ENCODE measurements at regions of chr5 and their contacts with region 1.

Region 1: GRCh38 chr5:17343675-17344074 is 126.2 kb downstream of the BASP1 start:
- DNase-seq: peak; percentile 59
- ATAC-seq: peak; percentile 82
- H3K4me3 ChIP-seq: no peak overlapping the region
- H3K4me3 Mint-ChIP-seq: peak overlapping the region; percentile 9
- H3K27ac ChIP-seq: no peak overlapping the region
- H3K27ac Mint-ChIP-seq: peak overlapping the region; percentile 61
- H3K4me1 ChIP-seq: peaks cover 7 to 9% of the 10 kb centered on the region in 2 donors
- H3K4me1 Mint-ChIP-seq: peaks cover 9% of the 10 kb centered on the region
- H3K27me3 ChIP-seq: no peaks in the 10 kb centered on the region
- H3K27me3 Mint-ChIP-seq: no peaks in the 10 kb centered on the region
- CTCF ChIP-seq: no peak

Region 2: GRCh38 chr5:17269201-17269600 is 74.5 kb before region 1 on chr5:
- CTCF ChIA-PET with region 1: no interaction called
- POLR2A ChIA-PET with region 1: interaction called, 13 read pairs
- intact Hi-C with region 1: no loop called
- DNase-seq: peak; percentile 48
- ATAC-seq: peak; percentile 59
- H3K4me3 ChIP-seq: peak overlapping the region in 2 of 5 experiments; percentile 14 to 15
- H3K4me3 Mint-ChIP-seq: peak overlapping the region; percentile 52
- H3K27ac ChIP-seq: peak overlapping the region; percentile 43 to 71
- H3K27ac Mint-ChIP-seq: peak overlapping the region; percentile 81
- H3K4me1 ChIP-seq: peaks cover 42 to 43% of the 10 kb centered on the region in 2 donors
- H3K4me1 Mint-ChIP-seq: peaks cover 76% of the 10 kb centered on the region
- H3K27me3 ChIP-seq: no peaks in the 10 kb centered on the region
- H3K27me3 Mint-ChIP-seq: no peaks in the 10 kb centered on the region
- CTCF ChIP-seq: no peak

Region 3: DNA sequence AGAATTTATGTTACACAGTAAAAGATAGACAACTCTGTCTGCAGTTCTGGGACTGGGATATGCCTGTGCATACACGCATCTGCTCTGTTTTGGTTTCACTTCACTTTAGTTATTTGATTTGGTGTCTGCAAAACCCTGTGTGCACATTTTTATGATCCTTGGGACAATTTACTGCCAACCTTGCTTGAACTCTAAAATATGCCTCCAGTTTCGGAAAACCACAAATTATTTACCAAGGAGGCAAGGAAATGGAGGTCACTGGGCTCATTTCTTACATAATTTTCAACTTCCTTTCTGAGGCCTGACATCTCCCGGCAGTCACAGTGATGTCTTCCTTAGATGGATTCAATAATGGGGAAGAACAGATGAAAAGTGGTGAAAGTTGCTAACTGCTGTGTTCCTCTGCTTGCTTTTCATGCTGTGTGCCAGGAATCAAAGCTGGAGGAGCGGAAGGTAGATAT is 93.1 kb after region 1 on chr5:
- CTCF ChIA-PET with region 1: no interaction called
- POLR2A ChIA-PET with region 1: no interaction called
- intact Hi-C with region 1: loop called (anchors 10 kb)
- DNase-seq: peak; percentile 51
- ATAC-seq: peak; percentile 63
- H3K4me3 ChIP-seq: peak overlapping the region; percentile 31 to 70 (median 48)
- H3K4me3 Mint-ChIP-seq: peak overlapping the region; percentile 85
- H3K27ac ChIP-seq: peak overlapping the region; percentile 42 to 74
- H3K27ac Mint-ChIP-seq: peak overlapping the region; percentile 81
- H3K4me1 ChIP-seq: peaks cover 14 to 17% of the 10 kb centered on the region in 2 donors
- H3K4me1 Mint-ChIP-seq: peaks cover 28% of the 10 kb centered on the region
- H3K27me3 ChIP-seq: no peaks in the 10 kb centered on the region
- H3K27me3 Mint-ChIP-seq: no peaks in the 10 kb centered on the region
- CTCF ChIP-seq: no peak

Measured in B cell (primary cell).